HepG2 (cell line): ENCODE measurements at regions of chr2 and their contacts with region 1.

Region 1: GRCh38 chr2:207792244-207792785 is 22.6 kb upstream of the FZD5 start:
- DNase-seq: peak; percentile 84
- ATAC-seq: peak; percentile 66
- H3K4me3 ChIP-seq: peak overlapping the region in 1 of 3 experiments; percentile 49; a peak in 2 of 6 replicates
- H3K27ac ChIP-seq: peak overlapping the region; percentile 82
- H3K4me1 ChIP-seq: peaks cover 73% of the 10 kb centered on the region
- H3K27me3 ChIP-seq: no peaks in the 10 kb centered on the region
- CTCF ChIP-seq: no peak
- EP300 ChIP-seq: peak in 1 of 2 experiments; percentile 16; a peak in 1 of 4 replicates
- POLR2A ChIP-seq: 0 out of 4 replicates have a peak, but pooled peaks have one; percentile 44 to 53
- RAD21 ChIP-seq: no peak

Region 2: GRCh38 chr2:206962966-206963365 is 829.3 kb before region 1 on chr2:
- CTCF ChIA-PET with region 1: no interaction called
- POLR2A ChIA-PET with region 1: no interaction called
- in situ Hi-C with region 1: no loop called
- intact Hi-C with region 1: no loop called
- DNase-seq: no peak
- ATAC-seq: peak; percentile 68
- H3K4me3 ChIP-seq: no peak overlapping the region
- H3K27ac ChIP-seq: no peak overlapping the region
- H3K4me1 ChIP-seq: peaks cover under 1% of the 10 kb centered on the region; the same call in 1 of the 2 replicates
- H3K27me3 ChIP-seq: no peaks in the 10 kb centered on the region
- CTCF ChIP-seq: no peak
- EP300 ChIP-seq: no peak
- POLR2A ChIP-seq: no peak
- RAD21 ChIP-seq: no peak

Region 3: GRCh38 chr2:207676827-207677354 is 115.4 kb before region 1 on chr2:
- CTCF ChIA-PET with region 1: no interaction called
- POLR2A ChIA-PET with region 1: no interaction called
- in situ Hi-C with region 1: no loop called
- intact Hi-C with region 1: no loop called
- DNase-seq: peak; percentile 26
- ATAC-seq: no peak; the same call in 2 of the 3 replicates
- H3K4me3 ChIP-seq: no peak overlapping the region
- H3K27ac ChIP-seq: no peak overlapping the region
- H3K4me1 ChIP-seq: no peaks in the 10 kb centered on the region
- H3K27me3 ChIP-seq: no peaks in the 10 kb centered on the region
- CTCF ChIP-seq: no peak
- EP300 ChIP-seq: no peak
- POLR2A ChIP-seq: no peak
- RAD21 ChIP-seq: no peak

Region 4: DNA sequence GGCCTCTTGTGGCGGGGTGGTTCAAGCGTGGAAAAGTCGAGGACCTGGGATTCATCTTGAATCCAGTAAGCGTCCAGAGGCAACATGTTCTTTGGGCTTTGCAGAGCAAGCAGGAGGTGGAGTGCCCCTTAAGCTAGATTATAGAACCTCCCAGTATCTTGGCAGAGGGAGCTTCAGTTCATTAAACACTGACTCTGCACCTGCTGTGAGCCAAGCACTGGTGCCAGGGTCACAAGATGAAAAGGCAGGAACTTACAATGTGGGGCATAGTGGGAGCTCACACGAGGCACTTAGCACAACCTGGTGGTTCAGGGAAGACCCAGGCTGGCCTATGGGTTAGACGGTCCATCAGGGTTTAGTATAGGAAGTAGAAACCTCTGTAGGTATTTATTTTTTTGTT is 15.2 kb before region 1 on chr2:
- CTCF ChIA-PET with region 1: no interaction called
- POLR2A ChIA-PET with region 1: interaction called, 75 read pairs
- in situ Hi-C with region 1: no loop called
- intact Hi-C with region 1: no loop called
- DNase-seq: no peak
- ATAC-seq: peak; percentile 19; the same call in 2 of the 3 replicates
- H3K4me3 ChIP-seq: no peak overlapping the region
- H3K27ac ChIP-seq: no peak overlapping the region
- H3K4me1 ChIP-seq: peaks cover 80% of the 10 kb centered on the region
- H3K27me3 ChIP-seq: no peaks in the 10 kb centered on the region
- CTCF ChIP-seq: no peak
- EP300 ChIP-seq: no peak
- POLR2A ChIP-seq: no peak
- RAD21 ChIP-seq: no peak

Region 5: GRCh38 chr2:207805566-207806226 is 13.4 kb after region 1 on chr2:
- CTCF ChIA-PET with region 1: no interaction called
- POLR2A ChIA-PET with region 1: interaction called, 29 read pairs
- in situ Hi-C with region 1: no loop called
- intact Hi-C with region 1: no loop called
- DNase-seq: peak; percentile 39
- ATAC-seq: peak; percentile 15; the same call in 1 of the 3 replicates
- H3K4me3 ChIP-seq: no peak overlapping the region
- H3K27ac ChIP-seq: peak overlapping the region; percentile 43
- H3K4me1 ChIP-seq: peaks cover 61% of the 10 kb centered on the region
- H3K27me3 ChIP-seq: no peaks in the 10 kb centered on the region
- CTCF ChIP-seq: no peak
- EP300 ChIP-seq: no peak
- POLR2A ChIP-seq: no peak
- RAD21 ChIP-seq: no peak

Region 6: GRCh38 chr2:207813221-207813916 is 21.1 kb after region 1 on chr2:
- CTCF ChIA-PET with region 1: no interaction called
- POLR2A ChIA-PET with region 1: interaction called, 42 read pairs
- in situ Hi-C with region 1: no loop called
- intact Hi-C with region 1: loop called (anchors 2 kb)
- DNase-seq: no peak
- ATAC-seq: 0 out of 3 replicates have a peak, but pooled peaks have one; percentile 6
- H3K4me3 ChIP-seq: no peak overlapping the region
- H3K27ac ChIP-seq: no peak overlapping the region
- H3K4me1 ChIP-seq: peaks cover 88% of the 10 kb centered on the region
- H3K27me3 ChIP-seq: no peaks in the 10 kb centered on the region
- CTCF ChIP-seq: no peak; the same call in 1 of the 2 replicates
- EP300 ChIP-seq: no peak
- POLR2A ChIP-seq: no peak
- RAD21 ChIP-seq: 0 out of 2 replicates have a peak, but pooled peaks have one; percentile 12